GM18951 (cell line): ENCODE measurements at regions of chr16 and their contacts with region 1.

Region 1: GRCh38 chr16:30005341-30006094 is 5.3 kb downstream of the DOC2A start:
- POLR2A ChIP-seq: no peak

Region 2: DNA sequence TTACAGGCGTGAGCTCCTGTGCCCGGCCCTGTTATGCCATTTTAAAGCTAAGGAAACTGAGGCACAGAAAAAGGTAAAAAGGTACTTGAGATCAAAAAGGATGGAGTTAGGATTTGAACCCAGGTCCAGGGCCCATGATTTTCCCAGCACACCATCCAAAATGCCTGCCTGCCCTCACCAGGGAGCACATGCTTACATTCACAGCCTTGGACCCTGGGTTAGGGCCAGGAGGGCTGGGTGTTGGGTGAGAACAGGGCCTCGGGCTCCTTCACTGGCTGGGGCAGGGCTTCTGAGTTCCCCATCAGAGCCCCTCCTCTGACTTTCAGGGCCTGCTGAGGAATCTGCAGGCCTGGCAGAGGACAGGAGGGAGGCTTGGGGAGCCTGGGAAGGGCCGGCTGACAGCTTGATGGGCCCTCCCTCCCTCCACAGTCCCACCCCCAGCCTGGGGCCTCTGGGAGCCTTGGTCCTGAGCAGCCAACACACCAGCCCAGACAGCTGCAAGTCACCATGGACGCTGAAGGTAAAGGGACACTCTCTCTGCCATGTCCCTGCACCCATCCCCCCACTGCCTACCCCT is 326.7 kb before region 1 on chr16 and contains the start of gene QPRT:
- in situ Hi-C with region 1: loop called (anchors 25 kb)
- POLR2A ChIP-seq: no peak